ENCODE measurements at regions of chr1 and their contacts with region 1.

Region 1: GRCh38 chr1:3910857-3911845 is 11.1 kb upstream of the C1orf174 start:
- DNase-seq: peak; percentile 90
- ATAC-seq: peak; percentile 87
- H3K4me3 Mint-ChIP-seq: no peak overlapping the region
- H3K27ac Mint-ChIP-seq: no peak overlapping the region
- H3K4me1 Mint-ChIP-seq: peaks cover 3% of the 10 kb centered on the region
- H3K27me3 Mint-ChIP-seq: no peaks in the 10 kb centered on the region

Region 2: DNA sequence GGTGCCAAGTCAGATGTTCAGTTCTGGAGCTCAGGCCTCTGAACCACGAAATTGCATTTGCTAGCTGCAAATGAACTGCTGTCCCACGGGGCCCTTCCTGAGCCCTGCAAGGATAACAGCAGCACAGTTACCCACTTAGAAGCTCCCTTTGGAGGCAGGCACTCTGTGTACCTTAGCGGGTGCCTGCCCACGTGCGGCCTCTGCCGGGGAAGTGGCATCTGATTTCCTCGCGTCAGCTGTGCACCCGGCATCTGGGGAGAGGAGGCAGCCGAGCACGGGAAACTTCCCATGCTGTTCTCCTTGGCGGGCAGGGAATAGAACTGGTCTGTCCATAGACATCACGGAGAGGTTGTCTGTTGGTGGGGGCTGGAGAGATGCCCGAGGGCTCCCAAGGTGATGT is 136.9 kb after region 1 on chr1:
- CTCF ChIA-PET with region 1: no interaction called
- POLR2A ChIA-PET with region 1: no interaction called
- intact Hi-C with region 1: loop called in 1 of 2 experiments (anchors 10 kb)
- DNase-seq: no peak
- ATAC-seq: no peak
- H3K4me3 Mint-ChIP-seq: no peak overlapping the region
- H3K27ac Mint-ChIP-seq: no peak overlapping the region
- H3K4me1 Mint-ChIP-seq: no peaks in the 10 kb centered on the region
- H3K27me3 Mint-ChIP-seq: peaks cover 9% of the 10 kb centered on the region

Measured in activated CD4-positive, alpha-beta T cell treated with anti-CD3 and anti-CD28 coated beads for 36 hours (primary cell).